AG04450 (cell line): ENCODE measurements at regions of chr21 and their contacts with region 1.

Region 1: DNA sequence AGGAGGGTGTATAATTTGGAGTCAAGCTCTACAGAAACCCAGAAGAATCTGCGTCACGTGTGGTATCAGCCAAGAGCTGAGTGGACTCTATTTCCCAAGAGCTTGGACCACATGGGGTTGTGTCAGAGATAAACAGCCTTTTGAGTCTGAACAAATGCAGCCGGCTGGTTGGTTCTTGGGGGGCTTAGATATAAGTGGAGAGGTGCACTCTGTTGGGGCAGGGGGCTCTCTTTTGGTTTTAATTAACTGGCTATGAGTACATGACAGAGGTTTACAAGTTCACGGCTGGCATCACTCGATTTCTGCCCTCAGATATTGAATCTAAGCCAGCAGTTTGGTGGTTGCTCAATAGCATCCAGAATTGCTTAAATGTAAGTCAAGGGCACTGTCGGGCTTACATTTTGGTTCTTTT is 501 bp upstream of the MRAP start:
- DNase-seq: no peak
- H3K4me3 ChIP-seq: no peak overlapping the region
- H3K27ac ChIP-seq: no peak overlapping the region
- H3K27me3 ChIP-seq: no peaks in the 10 kb centered on the region
- CTCF ChIP-seq: no peak

Region 2: DNA sequence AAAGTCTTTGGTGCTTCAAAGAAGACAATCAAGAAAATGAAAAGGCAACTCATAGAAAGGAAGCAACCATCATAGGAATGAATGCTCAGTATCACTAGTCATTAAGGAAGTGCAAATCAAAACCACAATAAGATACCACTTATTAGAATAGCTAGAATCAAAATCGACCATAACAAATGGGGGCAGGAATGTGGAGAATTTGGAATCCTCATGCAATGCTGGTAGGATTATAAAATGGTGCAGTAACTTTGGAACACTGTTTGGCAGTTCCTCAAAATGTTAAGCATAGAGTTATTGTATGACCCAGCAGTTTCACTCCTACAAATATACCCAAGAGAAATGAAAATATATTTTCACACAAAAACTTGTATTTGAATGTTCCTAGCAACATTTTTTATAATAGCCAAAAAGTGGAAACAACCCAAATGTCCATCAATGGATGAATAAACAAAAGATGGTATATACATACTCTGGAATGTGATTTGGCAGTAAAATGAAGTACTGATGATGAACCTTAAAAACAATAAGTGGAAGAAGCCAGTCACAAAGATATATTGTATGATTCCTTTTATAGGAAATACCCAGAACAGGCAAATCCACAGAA is 124.9 kb before region 1 on chr21:
- CTCF ChIA-PET with region 1: no interaction called
- POLR2A ChIA-PET with region 1: no interaction called
- DNase-seq: no peak
- H3K4me3 ChIP-seq: no peak overlapping the region
- H3K27ac ChIP-seq: no peak overlapping the region
- H3K27me3 ChIP-seq: no peaks in the 10 kb centered on the region
- CTCF ChIP-seq: no peak

Region 3: DNA sequence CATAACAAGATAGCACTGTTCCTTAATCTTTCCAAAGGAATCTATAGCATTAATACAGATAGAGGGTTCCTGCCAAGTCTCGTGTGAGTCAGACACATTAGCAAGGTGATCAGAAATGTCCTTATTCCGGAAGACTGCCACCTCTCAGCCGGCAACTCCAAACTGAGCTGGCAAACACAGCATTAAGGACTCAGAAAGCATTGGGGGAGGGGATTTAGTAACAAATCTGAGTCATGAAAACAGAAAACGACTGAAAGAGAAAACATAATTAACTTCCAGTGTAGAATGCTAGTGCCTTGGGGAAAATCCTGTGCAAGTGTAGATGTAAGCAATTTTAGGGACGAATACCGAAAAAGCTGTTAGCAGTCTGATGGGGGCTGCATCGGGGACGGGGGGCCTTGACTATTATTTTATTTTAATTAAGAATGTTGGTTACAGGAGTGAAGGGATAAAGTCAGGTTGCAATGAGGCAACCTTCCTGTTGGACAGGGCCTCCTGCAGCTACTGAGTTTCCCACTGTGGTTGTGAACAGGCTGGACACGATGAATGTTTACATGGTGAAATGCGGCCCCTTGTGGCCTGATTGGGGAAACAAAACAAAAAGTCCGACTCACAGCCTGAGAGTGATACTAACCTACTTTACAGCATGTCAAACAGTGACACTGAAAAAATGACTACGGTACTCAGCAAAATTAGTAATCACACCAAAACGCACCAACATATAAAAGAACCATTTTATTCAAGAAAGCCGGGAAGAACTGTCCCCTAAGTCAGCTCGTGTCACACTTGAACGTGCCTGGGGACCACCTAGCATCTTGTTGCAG is 40.0 kb before region 1 on chr21:
- CTCF ChIA-PET with region 1: no interaction called
- POLR2A ChIA-PET with region 1: no interaction called
- DNase-seq: peak; percentile 54
- H3K4me3 ChIP-seq: no peak overlapping the region
- H3K27ac ChIP-seq: no peak overlapping the region
- H3K27me3 ChIP-seq: no peaks in the 10 kb centered on the region
- CTCF ChIP-seq: peak; percentile 86

Region 4: GRCh38 chr21:32278518-32279376 is 19.4 kb before region 1 on chr21 and contains the start of gene MIS18A:
- CTCF ChIA-PET with region 1: interaction called, 10 read pairs
- POLR2A ChIA-PET with region 1: no interaction called
- DNase-seq: peak; percentile 91
- H3K4me3 ChIP-seq: peak within 1 kb of the TSS; percentile 94
- H3K27ac ChIP-seq: peak within 1 kb of the TSS; percentile 77
- H3K27me3 ChIP-seq: no peaks in the 10 kb centered on the region
- CTCF ChIP-seq: no peak
- polyA plus RNA-seq, gene MIS18A: 4.7 and 6.3 TPM in 2 replicates

Region 5: GRCh38 chr21:32329331-32329730 is 31.2 kb after region 1 on chr21:
- CTCF ChIA-PET with region 1: no interaction called
- POLR2A ChIA-PET with region 1: interaction called, 10 read pairs
- DNase-seq: no peak
- H3K4me3 ChIP-seq: no peak overlapping the region
- H3K27ac ChIP-seq: peak overlapping the region; percentile 81
- H3K27me3 ChIP-seq: no peaks in the 10 kb centered on the region
- CTCF ChIP-seq: no peak